SK-N-SH (cell line): ENCODE measurements at regions of chr11 and their contacts with region 1.

Region 1: GRCh38 chr11:78645226-78646202 is 70.8 kb upstream of the NARS2 start:
- DNase-seq: peak; percentile 80
- H3K4me3 ChIP-seq: no peak overlapping the region; a peak in 1 of 4 replicates
- H3K27ac ChIP-seq: no peak overlapping the region
- H3K4me1 ChIP-seq: peaks cover 0 to 8% of the 10 kb centered on the region in 2 experiments; a peak in 1 of 4 replicates
- H3K27me3 ChIP-seq: no peaks in the 10 kb centered on the region
- CTCF ChIP-seq: peak; percentile 98
- EP300 ChIP-seq: no peak
- RAD21 ChIP-seq: peak; percentile 97

Region 2: DNA sequence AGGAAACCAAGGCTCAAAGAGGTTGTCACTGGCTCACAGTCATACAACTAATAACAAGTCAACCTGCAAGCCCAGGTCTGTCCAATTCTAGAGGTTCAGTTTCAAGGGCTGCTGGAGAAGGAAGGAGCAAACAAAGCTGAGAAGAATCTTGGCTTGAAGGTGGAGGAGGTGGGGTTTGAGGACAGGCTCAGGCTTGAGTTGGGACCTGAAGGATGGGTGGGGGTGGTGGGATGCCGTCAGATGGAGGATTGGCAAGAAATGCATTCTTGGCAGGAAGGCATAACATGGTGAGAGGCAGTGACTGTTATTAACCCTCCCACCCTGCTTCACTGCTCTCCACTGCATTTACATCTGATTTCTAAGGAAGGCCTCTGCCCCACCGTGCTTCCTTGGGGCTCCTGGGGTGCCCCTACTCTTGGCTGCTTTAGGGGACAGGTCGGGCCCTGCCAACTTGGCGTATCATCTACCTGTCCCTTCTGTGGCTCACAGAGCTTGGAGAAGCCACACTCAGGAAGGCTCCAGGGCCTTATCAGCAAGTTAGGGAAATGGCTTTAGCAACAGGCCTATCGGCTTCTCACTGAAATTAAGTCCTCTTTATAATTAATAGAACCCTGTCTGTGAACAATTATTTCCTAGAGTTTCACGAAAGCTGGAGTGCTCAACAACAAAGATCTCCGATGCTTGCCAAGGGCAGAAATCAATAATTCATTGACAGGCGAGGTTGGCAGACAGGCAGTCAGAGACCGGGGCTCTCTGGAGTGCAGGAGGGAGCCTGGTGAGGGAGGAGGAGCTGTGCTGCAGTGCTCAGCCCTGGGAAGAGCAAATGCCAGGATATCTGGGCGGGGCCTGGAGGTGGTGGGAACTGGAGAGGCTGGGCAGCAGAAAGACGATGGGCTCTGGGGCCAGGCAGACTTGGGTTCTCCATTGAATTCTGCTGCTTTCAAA is 14.1 kb after region 1 on chr11:
- CTCF ChIA-PET with region 1: interaction called, 53 read pairs
- POLR2A ChIA-PET with region 1: no interaction called
- DNase-seq: no peak
- H3K4me3 ChIP-seq: no peak overlapping the region
- H3K27ac ChIP-seq: no peak overlapping the region
- H3K4me1 ChIP-seq: no peaks in the 10 kb centered on the region
- H3K27me3 ChIP-seq: no peaks in the 10 kb centered on the region
- CTCF ChIP-seq: no peak
- EP300 ChIP-seq: no peak
- RAD21 ChIP-seq: no peak

Region 3: GRCh38 chr11:78715639-78716311 is 70.3 kb after region 1 on chr11:
- CTCF ChIA-PET with region 1: interaction called, 77 read pairs
- POLR2A ChIA-PET with region 1: no interaction called
- DNase-seq: peak; percentile 72
- H3K4me3 ChIP-seq: peak overlapping the region in 1 of 2 experiments; percentile 40; a peak in 1 of 4 replicates
- H3K27ac ChIP-seq: peak overlapping the region in 1 of 2 experiments; percentile 63; a peak in 2 of 4 replicates
- H3K4me1 ChIP-seq: peaks cover 0 to 23% of the 10 kb centered on the region in 2 experiments; a peak in 3 of 4 replicates
- H3K27me3 ChIP-seq: no peaks in the 10 kb centered on the region
- CTCF ChIP-seq: peak; percentile 79
- EP300 ChIP-seq: 0 out of 4 replicates have a peak, but pooled peaks of 1 of the 2 experiments have one; percentile 1
- RAD21 ChIP-seq: peak; percentile 70

Region 4: GRCh38 chr11:78812513-78813293 is 167.2 kb after region 1 on chr11:
- CTCF ChIA-PET with region 1: interaction called, 11 read pairs
- POLR2A ChIA-PET with region 1: no interaction called
- DNase-seq: no peak
- H3K4me3 ChIP-seq: no peak overlapping the region
- H3K27ac ChIP-seq: peak overlapping the region in 1 of 2 experiments; percentile 14; a peak in 1 of 4 replicates
- H3K4me1 ChIP-seq: peaks cover 18 to 42% of the 10 kb centered on the region in 2 experiments; a peak in 2 of 4 replicates
- H3K27me3 ChIP-seq: no peaks in the 10 kb centered on the region
- CTCF ChIP-seq: no peak
- EP300 ChIP-seq: no peak
- RAD21 ChIP-seq: no peak

Region 5: GRCh38 chr11:78869293-78869692 is 223.8 kb after region 1 on chr11:
- CTCF ChIA-PET with region 1: interaction called, 10 read pairs
- POLR2A ChIA-PET with region 1: no interaction called
- DNase-seq: no peak
- H3K4me3 ChIP-seq: no peak overlapping the region
- H3K27ac ChIP-seq: peak overlapping the region in 1 of 2 experiments; percentile 69; a peak in 2 of 4 replicates
- H3K4me1 ChIP-seq: peaks cover 0 to 27% of the 10 kb centered on the region in 2 experiments; a peak in 2 of 4 replicates
- H3K27me3 ChIP-seq: no peaks in the 10 kb centered on the region
- CTCF ChIP-seq: no peak
- EP300 ChIP-seq: no peak
- RAD21 ChIP-seq: no peak

Region 6: DNA sequence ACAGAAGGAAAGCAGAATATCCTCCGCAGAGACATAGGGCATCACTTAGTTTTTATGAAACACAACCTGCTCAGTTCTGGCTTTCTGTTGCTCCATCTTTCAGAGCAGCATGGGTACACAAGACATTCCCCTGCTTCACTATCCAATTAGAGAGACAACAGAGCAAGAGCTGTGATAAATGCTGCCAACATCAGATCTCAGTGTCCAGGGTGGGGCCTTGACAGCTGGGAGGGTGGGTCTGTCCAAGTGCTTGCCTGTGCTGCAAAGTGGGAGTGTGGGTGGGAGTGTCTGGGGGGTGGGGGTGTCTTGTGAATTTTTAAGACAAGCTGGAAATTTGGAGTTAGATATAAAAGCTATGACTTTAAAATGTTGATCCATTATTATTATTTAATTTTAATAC is 425.7 kb after region 1 on chr11:
- CTCF ChIA-PET with region 1: interaction called, 11 read pairs
- POLR2A ChIA-PET with region 1: no interaction called
- DNase-seq: no peak
- H3K4me3 ChIP-seq: no peak overlapping the region
- H3K27ac ChIP-seq: no peak overlapping the region; a peak in 1 of 4 replicates
- H3K4me1 ChIP-seq: peaks cover 0 to 67% of the 10 kb centered on the region in 2 experiments; a peak in 3 of 4 replicates
- H3K27me3 ChIP-seq: no peaks in the 10 kb centered on the region
- CTCF ChIP-seq: no peak
- EP300 ChIP-seq: no peak
- RAD21 ChIP-seq: no peak

Region 7: DNA sequence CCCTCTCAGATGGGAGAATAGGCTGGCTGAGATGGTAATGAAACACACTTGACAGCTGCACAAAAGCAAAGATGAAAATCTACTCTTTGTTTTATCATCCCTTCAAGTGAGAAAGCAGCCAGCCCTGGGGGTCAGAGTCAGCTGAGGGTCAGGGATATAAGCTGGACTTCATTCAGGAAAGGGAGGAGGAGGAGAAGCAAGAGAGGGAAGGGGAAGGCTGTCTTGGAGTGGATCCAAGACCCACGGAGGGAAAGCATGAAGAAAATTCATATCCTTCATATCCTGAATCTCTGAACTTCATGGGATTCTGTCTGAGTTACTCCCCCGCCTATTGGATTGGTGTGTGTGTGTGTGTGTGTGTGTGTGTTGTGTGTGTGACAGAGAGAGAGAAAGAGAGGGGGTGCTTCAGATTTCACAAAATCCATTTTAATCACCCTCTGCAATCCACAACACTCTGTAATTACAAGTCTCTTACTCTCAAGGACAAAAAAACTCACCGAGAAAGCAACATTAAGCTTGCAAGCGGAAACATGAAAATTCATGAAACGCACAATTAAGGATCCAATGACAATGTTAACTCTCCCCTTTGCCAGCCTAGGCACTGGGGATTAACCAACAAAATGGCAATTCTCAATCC is 467.7 kb after region 1 on chr11:
- CTCF ChIA-PET with region 1: interaction called, 10 read pairs
- POLR2A ChIA-PET with region 1: no interaction called
- DNase-seq: no peak
- H3K4me3 ChIP-seq: no peak overlapping the region
- H3K27ac ChIP-seq: peak overlapping the region; percentile 17 to 25; a peak in 2 of 4 replicates
- H3K4me1 ChIP-seq: peaks cover 8 to 11% of the 10 kb centered on the region in 2 experiments; a peak in 3 of 4 replicates
- H3K27me3 ChIP-seq: no peaks in the 10 kb centered on the region
- CTCF ChIP-seq: no peak
- EP300 ChIP-seq: peak in 1 of 2 experiments; percentile 44; a peak in 1 of 4 replicates
- RAD21 ChIP-seq: no peak

Region 8: DNA sequence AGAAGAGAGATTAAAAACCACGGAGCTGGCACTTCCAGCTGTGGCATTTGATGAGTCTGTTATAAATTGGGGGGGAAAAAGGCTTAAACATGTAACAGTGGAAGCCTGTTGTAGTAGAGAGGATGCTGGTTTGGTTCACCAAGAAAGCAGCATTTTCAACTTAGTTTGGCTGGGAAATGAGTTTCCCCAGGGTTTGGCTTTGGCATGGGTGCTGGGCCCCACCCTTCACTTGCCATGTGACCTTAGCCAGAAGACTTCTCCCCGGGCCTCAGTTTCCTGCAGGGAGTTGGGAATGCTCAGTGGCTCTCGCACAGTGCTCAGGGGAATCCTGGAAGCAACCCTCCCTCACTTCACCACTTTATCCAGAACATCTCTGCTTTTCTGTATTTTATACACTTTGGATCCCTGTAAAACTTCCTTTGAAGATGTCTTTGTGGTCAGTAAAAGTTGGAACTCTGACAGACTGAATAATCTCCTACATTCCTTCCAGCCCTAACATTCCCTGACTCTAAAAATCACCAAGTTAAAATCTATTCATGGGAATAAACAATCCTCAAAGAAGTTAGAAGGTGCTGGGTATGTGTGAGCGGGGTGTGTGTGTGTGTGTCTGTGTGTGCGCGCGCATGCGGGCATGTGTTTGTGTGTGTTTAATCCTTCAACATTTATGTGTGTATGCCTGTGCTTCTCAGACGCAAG is 629.3 kb after region 1 on chr11:
- CTCF ChIA-PET with region 1: no interaction called
- POLR2A ChIA-PET with region 1: no interaction called
- DNase-seq: no peak
- H3K4me3 ChIP-seq: no peak overlapping the region
- H3K27ac ChIP-seq: peak overlapping the region; percentile 39 to 53; a peak in 3 of 4 replicates
- H3K4me1 ChIP-seq: peaks cover 6 to 32% of the 10 kb centered on the region in 2 experiments; a peak in 2 of 4 replicates
- H3K27me3 ChIP-seq: no peaks in the 10 kb centered on the region
- CTCF ChIP-seq: no peak
- EP300 ChIP-seq: no peak
- RAD21 ChIP-seq: no peak